Dendritic cell treated with granulocyte-macrophage colony-stimulating factor and Interleukin-4, amounts not matched to agents 40 ng/mL and 50 ng/mL, for 4 days (primary cell): ENCODE measurements at regions of chr2 and their contacts with region 1.

Region 1: DNA sequence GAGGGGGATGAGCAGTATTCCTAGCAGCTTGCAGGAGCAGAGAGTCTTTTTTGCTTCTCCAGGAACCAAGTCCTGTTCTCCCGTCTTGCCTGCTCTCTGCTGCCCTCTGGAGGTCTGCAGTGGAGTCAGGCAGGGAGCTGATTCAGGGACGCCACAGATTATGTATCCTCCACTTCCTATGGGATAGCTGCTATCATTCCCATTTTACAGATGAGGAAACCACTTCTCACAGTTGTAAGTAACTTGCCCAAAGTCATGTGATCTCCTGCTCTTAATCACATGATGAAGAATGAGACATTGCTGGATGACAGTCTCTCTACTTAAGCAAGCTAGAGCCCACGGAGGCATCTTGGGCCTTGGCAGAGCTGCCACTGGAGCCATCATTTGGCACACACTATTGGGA is 8.3 kb downstream of the SLC4A5 start:
- H3K4me3 Mint-ChIP-seq: no peak overlapping the region
- H3K27ac Mint-ChIP-seq: no peak overlapping the region
- H3K4me1 Mint-ChIP-seq: no peaks in the 10 kb centered on the region
- H3K27me3 Mint-ChIP-seq: no peaks in the 10 kb centered on the region

Region 2: GRCh38 chr2:73823916-73824523 is 510.9 kb before region 1 on chr2:
- intact Hi-C with region 1: loop called (anchors 1 kb)
- H3K4me3 Mint-ChIP-seq: no peak overlapping the region
- H3K27ac Mint-ChIP-seq: no peak overlapping the region
- H3K4me1 Mint-ChIP-seq: peaks cover 5% of the 10 kb centered on the region
- H3K27me3 Mint-ChIP-seq: peaks cover 8% of the 10 kb centered on the region

Region 3: DNA sequence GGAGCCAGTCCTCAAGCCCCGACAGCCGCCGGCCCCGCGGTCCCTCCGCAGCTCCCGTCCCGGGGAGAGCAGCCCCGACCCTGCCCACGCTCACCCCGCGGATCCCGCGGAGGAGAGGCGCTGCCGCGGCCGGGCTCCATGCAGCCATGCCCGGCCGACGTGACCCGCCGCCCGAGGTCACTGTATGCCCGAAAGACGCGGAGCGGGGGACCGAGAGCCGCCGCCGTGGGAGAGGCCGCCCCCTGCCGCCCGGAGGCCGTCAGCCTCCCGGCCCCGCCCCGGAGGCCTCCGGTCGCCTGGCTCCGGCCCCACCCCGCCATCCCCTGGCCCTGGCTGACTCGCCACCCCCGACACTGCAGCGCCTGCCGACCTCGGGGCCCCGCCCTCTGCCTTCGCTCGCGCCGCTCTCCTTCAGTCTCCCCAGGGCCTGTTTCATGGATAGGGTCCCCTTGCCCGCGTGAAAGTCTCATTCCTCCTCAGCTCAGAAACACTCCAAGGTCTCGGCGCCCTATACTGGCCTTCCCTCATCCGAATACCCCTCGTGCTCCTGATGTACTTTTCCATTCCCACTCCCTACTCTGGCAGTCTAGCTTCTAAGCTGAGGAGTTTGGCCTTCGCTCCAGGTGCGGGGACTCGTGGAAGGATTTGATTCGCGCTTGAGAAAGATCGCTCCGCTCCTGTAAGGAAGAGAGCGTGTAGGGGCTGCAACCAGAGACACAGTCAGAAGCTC is 187.0 kb before region 1 on chr2 and contains the start of gene BOLA3:
- intact Hi-C with region 1: loop called (anchors 10 kb)
- H3K4me3 Mint-ChIP-seq: no peak within 1 kb of the TSS
- H3K27ac Mint-ChIP-seq: no peak within 1 kb of the TSS
- H3K4me1 Mint-ChIP-seq: peaks cover 5% of the 10 kb centered on the region
- H3K27me3 Mint-ChIP-seq: no peaks in the 10 kb centered on the region

Region 4: GRCh38 chr2:74250189-74250631 is 84.7 kb before region 1 on chr2:
- intact Hi-C with region 1: loop called (anchors 2 kb)
- H3K4me3 Mint-ChIP-seq: no peak overlapping the region
- H3K27ac Mint-ChIP-seq: no peak overlapping the region
- H3K4me1 Mint-ChIP-seq: peaks cover 7% of the 10 kb centered on the region
- H3K27me3 Mint-ChIP-seq: no peaks in the 10 kb centered on the region